Endothelial cell of umbilical vein (primary cell): ENCODE measurements at regions of chr12 and their contacts with region 1.

Region 1: DNA sequence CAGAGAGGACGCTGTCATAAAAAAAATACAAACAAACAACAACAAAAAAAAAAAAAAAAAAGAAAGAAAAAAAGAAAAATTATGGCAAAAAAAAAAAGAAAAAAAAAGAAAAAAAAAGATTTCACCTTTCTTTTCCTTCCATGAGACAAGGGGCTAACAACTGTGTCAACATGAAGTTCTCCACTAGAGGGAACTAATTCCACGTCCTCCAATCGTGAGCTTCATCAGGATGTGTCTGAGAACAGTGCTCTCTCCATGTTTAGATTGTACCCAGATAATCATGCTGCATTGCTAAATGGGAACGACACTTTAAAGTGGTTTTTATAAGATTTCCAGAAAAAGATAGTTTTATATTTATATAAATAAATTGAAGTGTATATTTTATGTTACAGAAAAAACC is 96.2 kb upstream of the PTPRB start:
- DNase-seq: peak; percentile 71
- H3K4me3 ChIP-seq: no peak overlapping the region
- H3K27ac ChIP-seq: no peak overlapping the region
- H3K4me1 ChIP-seq: no peaks in the 10 kb centered on the region
- H3K27me3 ChIP-seq: peaks cover 0 to 7% of the 10 kb centered on the region in 2 experiments
- CTCF ChIP-seq: peak; percentile 51 to 63
- POLR2A ChIP-seq: no peak

Region 2: DNA sequence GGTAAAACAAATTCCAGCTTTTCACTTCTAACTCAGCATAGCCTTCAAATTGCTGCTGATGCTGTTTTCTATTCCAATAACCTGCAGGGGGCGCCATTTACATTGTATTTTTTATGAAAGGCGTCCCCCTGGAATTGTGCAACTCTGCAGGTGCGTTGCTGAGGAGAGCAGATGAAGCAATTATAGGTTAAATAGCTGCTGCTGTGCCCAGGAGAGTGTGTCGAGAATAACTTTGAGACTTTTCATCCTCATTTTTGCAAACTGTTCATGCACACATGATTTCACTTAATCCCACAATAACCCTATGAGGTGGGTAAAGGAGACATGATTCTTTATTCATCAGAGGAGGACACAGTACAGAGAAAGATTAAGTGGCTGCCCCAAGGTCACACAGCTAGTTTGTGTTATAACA is 832.7 kb before region 1 on chr12:
- CTCF ChIA-PET with region 1: interaction called, 41 read pairs
- POLR2A ChIA-PET with region 1: no interaction called
- dilution Hi-C with region 1: no loop called
- intact Hi-C with region 1: loop called (anchors 1 kb)
- DNase-seq: peak; percentile 72
- H3K4me3 ChIP-seq: no peak overlapping the region
- H3K27ac ChIP-seq: peak overlapping the region; percentile 35
- H3K4me1 ChIP-seq: peaks cover 12% of the 10 kb centered on the region
- H3K27me3 ChIP-seq: no peaks in the 10 kb centered on the region
- CTCF ChIP-seq: peak; percentile 62
- POLR2A ChIP-seq: no peak

Region 3: DNA sequence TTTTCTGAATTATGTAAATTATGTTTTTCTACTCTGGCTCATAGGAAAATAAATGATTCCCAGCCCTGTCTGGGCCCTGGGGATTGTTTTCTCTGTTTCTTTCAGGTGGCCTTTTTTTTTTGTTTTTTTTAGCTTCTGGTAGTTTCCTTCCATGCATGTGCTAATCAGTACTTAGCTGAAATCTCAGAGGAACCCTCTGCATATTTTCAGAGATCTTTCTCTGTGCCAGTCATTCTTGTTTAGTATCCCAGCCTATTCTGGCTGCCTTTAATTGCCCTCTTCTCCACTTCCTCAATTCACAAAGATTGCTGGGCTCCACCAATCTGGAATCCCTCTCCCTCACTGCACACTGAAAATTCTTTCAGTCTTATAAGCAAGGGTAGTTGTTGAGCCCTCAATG is 443.3 kb before region 1 on chr12:
- CTCF ChIA-PET with region 1: no interaction called
- POLR2A ChIA-PET with region 1: no interaction called
- dilution Hi-C with region 1: no loop called
- intact Hi-C with region 1: no loop called
- DNase-seq: peak; percentile 61
- H3K4me3 ChIP-seq: no peak overlapping the region
- H3K27ac ChIP-seq: no peak overlapping the region
- H3K4me1 ChIP-seq: peaks cover 2% of the 10 kb centered on the region
- H3K27me3 ChIP-seq: no peaks in the 10 kb centered on the region
- CTCF ChIP-seq: no peak
- POLR2A ChIP-seq: no peak

Region 4: GRCh38 chr12:70576346-70577282 is 156.8 kb before region 1 on chr12:
- CTCF ChIA-PET with region 1: interaction called, 30 read pairs
- POLR2A ChIA-PET with region 1: no interaction called
- dilution Hi-C with region 1: no loop called
- intact Hi-C with region 1: no loop called
- DNase-seq: peak; percentile 68
- H3K4me3 ChIP-seq: no peak overlapping the region
- H3K27ac ChIP-seq: peak overlapping the region; percentile 35
- H3K4me1 ChIP-seq: peaks cover 13% of the 10 kb centered on the region
- H3K27me3 ChIP-seq: no peaks in the 10 kb centered on the region
- CTCF ChIP-seq: peak; percentile 59 to 62
- POLR2A ChIP-seq: no peak

Region 5: DNA sequence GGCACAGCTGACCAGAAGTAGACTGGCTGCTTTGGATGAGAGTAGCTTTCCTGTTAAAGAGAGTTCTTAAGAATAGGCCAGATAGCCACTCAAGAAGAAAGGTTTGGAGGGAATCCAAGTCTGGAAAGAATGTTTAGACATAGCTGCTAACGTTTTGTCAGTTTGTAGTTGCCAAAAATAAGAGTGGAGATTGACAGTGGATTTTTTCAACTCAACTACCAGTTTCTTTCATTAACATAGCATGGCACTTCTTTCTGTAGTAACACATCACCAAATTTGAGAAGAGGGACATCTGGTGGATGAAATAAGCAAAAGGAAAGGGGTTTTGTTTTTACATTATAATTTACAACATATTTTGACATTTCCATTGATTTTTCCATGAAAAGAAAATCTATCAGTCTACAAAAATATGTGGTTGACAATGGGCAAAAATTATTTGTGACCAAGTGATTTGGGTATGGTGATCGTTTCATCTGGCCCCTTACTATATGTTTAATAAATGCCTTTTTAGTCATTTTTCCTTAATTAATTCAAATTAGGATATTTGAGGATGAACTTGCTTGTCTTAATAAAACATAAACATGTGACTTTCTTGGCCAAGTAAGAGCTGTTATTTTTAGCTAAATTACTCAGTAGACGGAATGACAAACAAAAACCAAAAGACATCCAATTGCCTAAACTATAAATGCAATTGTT is 116.0 kb after region 1 on chr12:
- CTCF ChIA-PET with region 1: interaction called, 66 read pairs
- POLR2A ChIA-PET with region 1: no interaction called
- dilution Hi-C with region 1: no loop called
- intact Hi-C with region 1: loop called (anchors 1 kb)
- DNase-seq: peak; percentile 39
- H3K4me3 ChIP-seq: no peak overlapping the region
- H3K27ac ChIP-seq: no peak overlapping the region
- H3K4me1 ChIP-seq: no peaks in the 10 kb centered on the region
- H3K27me3 ChIP-seq: peaks cover 3 to 5% of the 10 kb centered on the region in 2 experiments
- CTCF ChIP-seq: peak in 1 of 2 donors; percentile 20
- POLR2A ChIP-seq: no peak

Region 6: GRCh38 chr12:71636704-71637115 is 903.3 kb after region 1 on chr12:
- CTCF ChIA-PET with region 1: interaction called, 6 read pairs
- POLR2A ChIA-PET with region 1: no interaction called
- dilution Hi-C with region 1: no loop called
- intact Hi-C with region 1: loop called (anchors 10 kb)
- DNase-seq: peak; percentile 66
- H3K4me3 ChIP-seq: no peak overlapping the region
- H3K27ac ChIP-seq: no peak overlapping the region
- H3K4me1 ChIP-seq: no peaks in the 10 kb centered on the region
- H3K27me3 ChIP-seq: no peaks in the 10 kb centered on the region
- CTCF ChIP-seq: peak; percentile 53 to 66
- POLR2A ChIP-seq: no peak